AG04450 (cell line): ENCODE measurements at regions of chr15 and their contacts with region 1.

Region 1: GRCh38 chr15:94670438-94671034 is 439.2 kb downstream of the MCTP2 start:
- DNase-seq: peak; percentile 6
- H3K4me3 ChIP-seq: no peak overlapping the region
- H3K27ac ChIP-seq: no peak overlapping the region
- H3K27me3 ChIP-seq: no peaks in the 10 kb centered on the region
- CTCF ChIP-seq: peak; percentile 67

Region 2: DNA sequence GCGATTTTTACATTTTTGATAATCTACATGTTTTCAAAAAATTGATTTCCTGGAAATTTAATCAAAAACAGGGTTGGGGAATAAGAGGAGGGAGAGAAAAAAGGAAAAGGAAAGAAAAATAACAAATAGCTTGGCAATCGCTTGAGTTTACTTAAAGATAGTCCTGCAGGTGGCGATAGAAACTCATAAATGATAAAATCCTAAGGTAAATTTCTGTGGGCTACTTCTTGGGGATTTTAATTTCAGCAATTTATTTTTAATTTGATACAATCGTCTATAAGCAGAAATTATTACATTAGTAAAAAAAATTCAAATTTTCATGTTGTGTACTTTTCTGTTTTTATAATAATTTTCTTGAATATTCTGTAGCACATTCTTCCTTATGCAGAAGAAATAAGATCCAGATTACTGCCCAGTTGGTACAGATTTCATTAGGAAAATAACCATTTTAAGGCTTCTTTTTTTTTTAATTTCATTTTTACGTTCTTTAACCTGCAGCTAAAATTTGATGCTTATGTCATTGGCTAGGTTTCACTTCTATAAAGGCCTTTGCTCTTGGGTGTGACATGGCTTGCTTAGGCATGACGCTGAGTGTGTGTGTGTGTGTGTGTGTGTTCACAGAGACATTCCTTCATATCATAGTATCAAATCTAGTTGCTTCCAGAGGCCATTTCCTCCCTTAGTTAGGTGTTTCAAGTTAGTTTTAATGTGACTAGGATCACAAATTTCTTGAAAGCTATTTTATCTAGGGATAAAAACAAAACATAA is 257.4 kb before region 1 on chr15:
- CTCF ChIA-PET with region 1: interaction called, 19 read pairs
- POLR2A ChIA-PET with region 1: no interaction called
- DNase-seq: no peak
- H3K4me3 ChIP-seq: no peak overlapping the region
- H3K27ac ChIP-seq: no peak overlapping the region
- H3K27me3 ChIP-seq: no peaks in the 10 kb centered on the region
- CTCF ChIP-seq: peak; percentile 61

Region 3: DNA sequence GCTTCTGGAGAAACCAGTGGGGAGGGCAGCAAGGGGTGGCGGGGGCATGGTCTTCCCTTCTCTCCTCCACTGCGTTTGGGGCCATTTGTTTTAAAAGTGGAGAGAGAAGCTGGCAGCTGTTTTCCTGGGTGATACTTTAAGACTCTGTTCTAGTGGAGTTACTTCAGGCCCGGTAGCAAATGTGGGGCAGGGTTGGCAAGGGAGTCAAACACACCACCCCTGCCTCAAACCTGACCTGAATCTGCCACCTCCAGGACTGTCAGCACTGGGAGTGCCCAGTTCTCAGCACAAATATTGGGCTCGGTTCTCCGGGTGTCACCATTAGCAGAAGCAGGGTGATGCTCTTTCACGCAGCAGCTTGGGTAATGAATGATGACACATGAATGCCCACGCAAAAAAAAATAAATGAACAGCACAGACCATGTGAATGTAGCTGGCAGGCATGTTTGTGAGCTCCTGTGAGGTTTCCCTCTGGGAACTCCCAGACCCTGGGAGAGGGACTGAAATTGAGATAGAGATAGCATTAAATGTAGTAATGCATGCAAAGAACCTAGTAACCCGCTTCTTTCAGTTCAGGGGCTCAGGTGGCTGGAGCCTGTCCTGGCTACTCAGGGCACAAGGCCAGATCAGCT is 15.2 kb before region 1 on chr15:
- CTCF ChIA-PET with region 1: interaction called, 12 read pairs
- POLR2A ChIA-PET with region 1: no interaction called
- DNase-seq: no peak
- H3K4me3 ChIP-seq: no peak overlapping the region
- H3K27ac ChIP-seq: no peak overlapping the region
- H3K27me3 ChIP-seq: no peaks in the 10 kb centered on the region
- CTCF ChIP-seq: no peak

Region 4: DNA sequence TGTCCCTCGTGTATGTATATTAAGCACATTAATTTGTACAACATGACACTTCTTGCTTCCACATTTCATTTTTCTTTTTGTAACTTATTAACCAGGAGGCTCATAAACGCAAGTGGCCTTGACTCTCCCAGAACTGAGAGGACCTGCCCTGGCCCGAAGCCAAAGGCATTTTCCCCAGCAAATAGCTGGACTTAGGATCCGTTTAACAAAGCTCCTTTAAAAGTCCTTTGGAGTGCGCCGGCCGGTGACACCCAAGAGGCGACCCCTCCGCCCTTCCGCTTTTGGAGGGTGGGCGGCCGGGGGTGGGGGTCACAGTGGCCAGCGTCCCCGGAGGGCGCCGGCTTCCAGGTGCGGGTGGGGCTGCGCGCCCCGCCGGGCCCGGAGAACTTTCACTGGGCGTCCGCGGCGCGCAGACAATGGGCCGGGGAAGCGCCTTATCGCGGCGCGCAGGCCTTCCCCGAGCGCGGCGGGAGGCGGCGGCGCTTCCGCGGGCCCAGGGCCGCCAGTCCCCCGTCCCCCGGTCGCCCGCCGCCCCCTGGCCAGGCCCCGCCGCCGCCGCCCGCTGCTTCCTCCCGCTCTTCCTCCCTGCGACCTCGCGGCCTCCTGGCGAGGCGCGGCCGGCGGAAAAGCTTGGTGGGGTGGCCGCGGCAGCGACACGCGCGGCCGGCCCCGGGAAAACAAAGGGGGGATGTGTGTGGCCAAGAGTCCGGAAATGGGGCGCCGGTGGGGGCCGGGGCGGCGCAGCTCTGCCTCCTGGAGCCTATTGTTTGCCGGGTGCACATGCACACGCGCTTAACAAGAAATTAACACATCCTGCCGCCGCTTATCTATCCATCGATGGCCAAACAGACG is 174.2 kb after region 1 on chr15:
- CTCF ChIA-PET with region 1: no interaction called
- POLR2A ChIA-PET with region 1: no interaction called
- DNase-seq: no peak
- H3K4me3 ChIP-seq: peak overlapping the region; percentile 38
- H3K27ac ChIP-seq: no peak overlapping the region
- H3K27me3 ChIP-seq: no peaks in the 10 kb centered on the region
- CTCF ChIP-seq: peak; percentile 2; the same call in 1 of the 2 replicates

Region 5: GRCh38 chr15:94991718-94992117 is 321.2 kb after region 1 on chr15:
- CTCF ChIA-PET with region 1: no interaction called
- POLR2A ChIA-PET with region 1: no interaction called
- DNase-seq: no peak
- H3K4me3 ChIP-seq: no peak overlapping the region
- H3K27ac ChIP-seq: no peak overlapping the region
- H3K27me3 ChIP-seq: no peaks in the 10 kb centered on the region
- CTCF ChIP-seq: no peak

Region 6: GRCh38 chr15:95025924-95026728 is 355.6 kb after region 1 on chr15:
- CTCF ChIA-PET with region 1: interaction called, 40 read pairs
- POLR2A ChIA-PET with region 1: no interaction called
- DNase-seq: peak; percentile 33
- H3K4me3 ChIP-seq: no peak overlapping the region
- H3K27ac ChIP-seq: no peak overlapping the region
- H3K27me3 ChIP-seq: no peaks in the 10 kb centered on the region
- CTCF ChIP-seq: peak; percentile 85